H1 (cell line): ENCODE measurements at regions of chr12 and their contacts with region 1.

Region 1: GRCh38 chr12:57213058-57213715 is 3.4 kb upstream of the NXPH4 start:
- DNase-seq: peak in 1 of 2 experiments; percentile 92
- H3K4me3 ChIP-seq: peak overlapping the region in 3 of 4 experiments; percentile 4 to 13 (median 12); a peak in 3 of 8 replicates
- H3K27ac ChIP-seq: no peak overlapping the region
- H3K4me1 ChIP-seq: peaks cover 9 to 35% (median 25%) of the 10 kb centered on the region in 4 experiments
- H3K27me3 ChIP-seq: peaks cover 33 to 44% (median 42%) of the 10 kb centered on the region in 4 experiments
- CTCF ChIP-seq: peak in 2 of 3 experiments; percentile 88 to 90; a peak in 3 of 4 replicates
- EP300 ChIP-seq: no peak
- POLR2A ChIP-seq: peak in 1 of 2 experiments; percentile 22; a peak in 1 of 3 replicates
- RAD21 ChIP-seq: peak; percentile 76

Region 2: GRCh38 chr12:57008178-57008577 is 205.0 kb before region 1 on chr12:
- CTCF ChIA-PET with region 1: no interaction called
- POLR2A ChIA-PET with region 1: no interaction called
- DNase-seq: no peak
- H3K4me3 ChIP-seq: no peak overlapping the region
- H3K27ac ChIP-seq: no peak overlapping the region
- H3K4me1 ChIP-seq: peaks cover 2 to 15% (median 11%) of the 10 kb centered on the region in 4 experiments
- H3K27me3 ChIP-seq: no peaks in the 10 kb centered on the region
- CTCF ChIP-seq: peak in 2 of 3 experiments; percentile 53 to 60; a peak in 3 of 4 replicates
- EP300 ChIP-seq: no peak
- POLR2A ChIP-seq: no peak
- RAD21 ChIP-seq: peak; percentile 73 to 76

Region 3: DNA sequence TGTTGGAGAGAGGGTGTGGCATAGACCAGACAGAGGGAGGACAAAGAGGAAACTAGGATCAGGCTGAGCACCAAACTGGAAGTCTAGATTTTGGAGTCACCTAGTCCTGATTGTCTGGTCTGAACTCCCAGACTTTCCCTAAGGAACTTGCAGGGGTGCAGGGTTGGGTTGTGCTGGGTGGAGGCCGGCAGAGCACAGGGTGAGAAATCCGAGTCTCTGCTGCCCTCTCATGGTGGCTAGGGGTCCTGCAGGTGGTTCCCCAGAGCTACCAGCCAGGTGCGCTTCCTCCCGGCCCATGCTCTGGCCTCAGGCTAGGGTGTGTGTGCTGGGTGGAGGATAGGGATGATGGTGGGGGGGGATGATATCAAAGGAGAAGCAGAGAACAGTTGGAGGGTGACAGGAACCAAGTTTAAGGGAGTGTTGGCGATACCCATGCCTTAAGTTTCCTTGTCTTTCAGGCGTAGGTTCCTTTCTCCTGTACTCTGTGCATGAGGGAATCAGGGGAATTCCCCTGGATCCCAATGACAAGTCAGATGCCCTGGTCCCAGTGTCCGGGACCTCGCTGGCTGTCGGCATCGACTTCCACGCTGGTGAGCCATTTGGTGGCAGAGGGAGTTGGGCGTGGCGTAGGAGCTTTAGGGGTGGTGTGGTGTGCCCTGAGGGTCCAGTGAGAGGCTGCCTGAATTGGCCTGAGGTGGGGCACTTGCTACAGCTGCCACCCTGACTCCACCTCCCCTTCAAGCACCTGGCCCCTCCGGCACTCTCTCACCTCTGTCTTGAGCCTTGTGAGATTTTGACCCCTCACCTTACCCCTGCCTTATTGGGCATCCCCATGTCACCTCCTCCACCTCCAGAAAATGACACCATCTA is 30.0 kb before region 1 on chr12:
- CTCF ChIA-PET with region 1: interaction called, 78 read pairs
- POLR2A ChIA-PET with region 1: interaction called, 7 read pairs
- DNase-seq: peak; percentile 54 to 97
- H3K4me3 ChIP-seq: no peak overlapping the region
- H3K27ac ChIP-seq: no peak overlapping the region
- H3K4me1 ChIP-seq: no peaks in the 10 kb centered on the region; a peak in 1 of 7 replicates
- H3K27me3 ChIP-seq: no peaks in the 10 kb centered on the region
- CTCF ChIP-seq: peak in 2 of 3 experiments; percentile 82 to 96; a peak in 3 of 4 replicates
- EP300 ChIP-seq: no peak
- POLR2A ChIP-seq: no peak
- RAD21 ChIP-seq: peak; percentile 71 to 76

Region 4: GRCh38 chr12:57223191-57224165 is 10.3 kb after region 1 on chr12:
- CTCF ChIA-PET with region 1: interaction called, 726 read pairs
- POLR2A ChIA-PET with region 1: interaction called, 686 read pairs
- DNase-seq: no peak
- H3K4me3 ChIP-seq: no peak overlapping the region
- H3K27ac ChIP-seq: no peak overlapping the region
- H3K4me1 ChIP-seq: peaks cover 4 to 51% (median 33%) of the 10 kb centered on the region in 4 experiments
- H3K27me3 ChIP-seq: peaks cover 66 to 92% (median 89%) of the 10 kb centered on the region in 4 experiments
- CTCF ChIP-seq: no peak
- EP300 ChIP-seq: no peak
- POLR2A ChIP-seq: no peak
- RAD21 ChIP-seq: no peak

Region 5: GRCh38 chr12:57238854-57239554 is 25.8 kb after region 1 on chr12:
- CTCF ChIA-PET with region 1: interaction called, 726 read pairs
- POLR2A ChIA-PET with region 1: interaction called, 686 read pairs
- DNase-seq: peak in 1 of 2 experiments; percentile 98
- H3K4me3 ChIP-seq: peak overlapping the region; percentile 42 to 67 (median 54)
- H3K27ac ChIP-seq: no peak overlapping the region
- H3K4me1 ChIP-seq: peaks cover 6 to 68% (median 45%) of the 10 kb centered on the region in 4 experiments
- H3K27me3 ChIP-seq: peaks cover 59 to 80% (median 74%) of the 10 kb centered on the region in 4 experiments
- CTCF ChIP-seq: peak in 2 of 3 experiments; percentile 100; a peak in 3 of 4 replicates
- EP300 ChIP-seq: peak in 1 of 2 experiments; percentile 59; a peak in 1 of 3 replicates
- POLR2A ChIP-seq: peak in 1 of 2 experiments; percentile 24; a peak in 1 of 3 replicates
- RAD21 ChIP-seq: peak; percentile 85 to 91

Region 6: GRCh38 chr12:57272337-57273151 is 59.4 kb after region 1 on chr12:
- CTCF ChIA-PET with region 1: interaction called, 12 read pairs
- POLR2A ChIA-PET with region 1: no interaction called
- DNase-seq: no peak
- H3K4me3 ChIP-seq: no peak overlapping the region
- H3K27ac ChIP-seq: no peak overlapping the region
- H3K4me1 ChIP-seq: no peaks in the 10 kb centered on the region; a peak in 1 of 7 replicates
- H3K27me3 ChIP-seq: no peaks in the 10 kb centered on the region
- CTCF ChIP-seq: no peak
- EP300 ChIP-seq: no peak
- POLR2A ChIP-seq: no peak
- RAD21 ChIP-seq: no peak